ENCODE measurements at regions of chr3 and their contacts with region 1.

Region 1: GRCh38 chr3:134754768-134755559 is 40.1 kb upstream of the EPHB1 start:
- DNase-seq: peak in 3 of 5 donors; percentile 45 to 67 (median 57)
- ATAC-seq: peak in 2 of 4 donors; percentile 37 to 61
- H3K4me3 ChIP-seq: no peak overlapping the region
- H3K27ac ChIP-seq: no peak overlapping the region
- H3K4me1 ChIP-seq: peaks cover 0 to 18% (median 5%) of the 10 kb centered on the region in 12 donors
- H3K27me3 ChIP-seq: peaks cover 0 to 3% (median 0%) of the 10 kb centered on the region in 9 donors
- CTCF ChIP-seq: peak; percentile 26 to 58 (median 45)
- POLR2A ChIP-seq: no peak

Region 2: GRCh38 chr3:134697830-134698689 is 56.9 kb before region 1 on chr3:
- intact Hi-C with region 1: loop called in 2 of 10 experiments (anchors 5 kb)
- DNase-seq: peak in 2 of 5 donors; percentile 31 to 44
- ATAC-seq: peak; percentile 36 to 76 (median 70)
- H3K4me3 ChIP-seq: no peak overlapping the region
- H3K27ac ChIP-seq: peak overlapping the region in 10 of 12 donors; percentile 5 to 76 (median 56)
- H3K4me1 ChIP-seq: peaks cover 0 to 60% (median 17%) of the 10 kb centered on the region in 12 donors
- H3K27me3 ChIP-seq: no peaks in the 10 kb centered on the region
- CTCF ChIP-seq: peak in 1 of 12 donors; percentile 12
- POLR2A ChIP-seq: no peak

Region 3: DNA sequence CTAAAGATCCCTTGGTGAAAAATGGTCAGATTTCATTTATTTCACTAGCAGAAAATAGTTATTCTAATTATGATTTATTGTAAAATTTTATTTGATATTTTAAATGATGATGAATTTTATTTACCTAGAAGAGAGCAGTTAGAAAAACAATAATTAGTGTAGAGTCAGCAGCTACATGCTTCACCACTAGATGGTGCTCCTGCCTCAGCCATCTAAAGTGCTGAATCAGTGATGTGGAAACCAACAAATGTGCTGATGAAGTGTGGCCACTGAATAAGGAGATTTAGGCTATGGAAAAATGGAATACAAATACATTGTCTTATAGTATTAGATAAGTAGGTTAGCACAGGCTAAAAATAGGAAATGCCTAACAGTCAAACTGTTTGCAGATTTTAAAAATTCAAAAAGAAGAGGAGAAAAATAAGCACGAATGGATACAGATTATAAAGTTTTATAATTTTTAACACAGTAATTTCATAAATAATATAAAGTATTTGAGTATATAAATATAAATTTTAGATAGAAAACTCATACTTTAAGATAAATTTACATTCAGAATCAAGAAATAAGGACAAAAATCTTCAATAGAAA is 1320.3 kb after region 1 on chr3:
- intact Hi-C with region 1: no loop called
- DNase-seq: peak; percentile 54 to 68 (median 67)
- ATAC-seq: peak; percentile 78 to 84 (median 80)
- H3K4me3 ChIP-seq: no peak overlapping the region
- H3K27ac ChIP-seq: peak overlapping the region in 8 of 12 donors; percentile 0 to 59 (median 36)
- H3K4me1 ChIP-seq: peaks cover 0 to 33% (median 17%) of the 10 kb centered on the region in 12 donors
- H3K27me3 ChIP-seq: no peaks in the 10 kb centered on the region
- CTCF ChIP-seq: peak; percentile 78 to 97 (median 93)
- POLR2A ChIP-seq: no peak

Measured in heart left ventricle (tissue), 16 donors.